ENCODE measurements at regions of chr19 and their contacts with region 1.

Region 1: GRCh38 chr19:44757735-44758505 is 9.4 kb downstream of the BCL3 start:
- DNase-seq: peak in 1 of 2 donors; percentile 83
- H3K4me3 ChIP-seq: peak overlapping the region; percentile 59 to 60
- H3K27ac ChIP-seq: peak overlapping the region; percentile 84 to 91
- H3K4me1 ChIP-seq: peaks cover 16 to 46% of the 10 kb centered on the region in 2 donors
- H3K27me3 ChIP-seq: no peaks in the 10 kb centered on the region
- CTCF ChIP-seq: peak in 2 of 3 experiments; percentile 22 to 55

Region 2: DNA sequence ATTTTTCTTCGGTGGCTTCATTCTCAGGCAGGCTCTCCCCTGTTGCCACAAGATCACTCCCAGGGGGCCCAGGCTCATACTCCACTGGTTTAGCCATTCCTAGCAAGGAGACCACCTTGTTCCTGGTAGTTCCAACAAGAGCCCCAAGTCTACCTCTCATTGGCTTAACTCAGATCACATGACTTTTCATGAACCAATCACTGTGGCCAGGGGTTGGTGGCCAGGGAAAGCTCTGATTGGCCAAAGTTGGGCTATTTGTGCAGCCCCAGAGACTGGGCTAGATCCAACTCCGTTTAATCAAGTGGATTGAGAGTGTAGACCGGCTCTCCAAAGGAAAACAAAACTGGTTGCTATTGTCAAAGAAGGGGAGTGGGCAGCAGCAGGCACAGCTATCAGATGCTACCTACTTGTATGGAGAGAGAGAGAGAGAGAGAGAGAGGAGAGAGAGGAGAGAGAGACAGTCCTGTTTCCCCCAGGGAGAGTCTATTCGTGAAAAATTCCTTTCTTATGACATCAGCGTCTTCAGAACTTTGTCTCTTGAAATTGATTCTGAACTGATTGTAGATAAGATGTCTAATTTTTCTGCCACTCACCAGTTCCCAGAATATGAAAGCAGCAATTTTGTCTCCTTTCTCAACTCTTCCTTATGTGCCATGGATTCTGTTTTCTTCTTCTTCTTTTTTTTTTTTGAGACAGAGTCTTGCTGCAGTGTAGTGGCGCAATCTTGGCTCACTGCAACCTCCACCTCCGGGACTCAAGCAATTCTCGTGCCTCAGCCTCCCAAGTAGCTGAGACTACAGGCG is 80.7 kb before region 1 on chr19:
- intact Hi-C with region 1: no loop called
- DNase-seq: no peak
- H3K4me3 ChIP-seq: no peak overlapping the region
- H3K27ac ChIP-seq: no peak overlapping the region
- H3K4me1 ChIP-seq: no peaks in the 10 kb centered on the region
- H3K27me3 ChIP-seq: no peaks in the 10 kb centered on the region
- CTCF ChIP-seq: no peak

Region 3: DNA sequence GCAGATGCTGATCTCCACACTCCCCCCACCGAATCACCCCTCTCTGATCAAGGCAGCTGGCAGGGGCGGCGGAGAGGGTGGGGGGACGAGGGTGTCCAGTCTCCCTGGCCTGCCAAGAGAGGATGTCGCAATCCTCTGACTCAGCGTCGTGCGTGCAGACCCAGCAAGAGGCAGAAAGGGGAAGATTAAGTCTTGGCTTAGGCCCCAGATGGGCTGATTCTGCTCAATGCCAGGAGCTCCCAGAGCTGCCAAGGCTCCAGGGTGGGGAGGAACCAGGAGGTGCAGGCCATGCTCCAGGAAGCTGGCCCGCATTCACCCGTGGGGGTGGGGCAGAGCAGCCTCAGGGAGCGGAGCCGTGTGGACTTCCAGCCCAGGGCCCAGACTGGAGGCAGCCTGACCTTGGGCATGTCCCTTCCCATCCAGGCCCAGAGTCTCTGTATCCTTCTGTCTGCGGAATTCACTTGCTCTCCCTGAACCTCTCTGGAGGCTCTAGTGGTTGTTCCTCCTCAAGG is 16.0 kb before region 1 on chr19:
- intact Hi-C with region 1: loop called (anchors 1 kb)
- DNase-seq: peak; percentile 97 to 99
- H3K4me3 ChIP-seq: peak overlapping the region in 1 of 2 donors; percentile 17
- H3K27ac ChIP-seq: peak overlapping the region; percentile 82 to 83
- H3K4me1 ChIP-seq: peaks cover 24 to 32% of the 10 kb centered on the region in 2 donors
- H3K27me3 ChIP-seq: no peaks in the 10 kb centered on the region
- CTCF ChIP-seq: no peak

Region 4: DNA sequence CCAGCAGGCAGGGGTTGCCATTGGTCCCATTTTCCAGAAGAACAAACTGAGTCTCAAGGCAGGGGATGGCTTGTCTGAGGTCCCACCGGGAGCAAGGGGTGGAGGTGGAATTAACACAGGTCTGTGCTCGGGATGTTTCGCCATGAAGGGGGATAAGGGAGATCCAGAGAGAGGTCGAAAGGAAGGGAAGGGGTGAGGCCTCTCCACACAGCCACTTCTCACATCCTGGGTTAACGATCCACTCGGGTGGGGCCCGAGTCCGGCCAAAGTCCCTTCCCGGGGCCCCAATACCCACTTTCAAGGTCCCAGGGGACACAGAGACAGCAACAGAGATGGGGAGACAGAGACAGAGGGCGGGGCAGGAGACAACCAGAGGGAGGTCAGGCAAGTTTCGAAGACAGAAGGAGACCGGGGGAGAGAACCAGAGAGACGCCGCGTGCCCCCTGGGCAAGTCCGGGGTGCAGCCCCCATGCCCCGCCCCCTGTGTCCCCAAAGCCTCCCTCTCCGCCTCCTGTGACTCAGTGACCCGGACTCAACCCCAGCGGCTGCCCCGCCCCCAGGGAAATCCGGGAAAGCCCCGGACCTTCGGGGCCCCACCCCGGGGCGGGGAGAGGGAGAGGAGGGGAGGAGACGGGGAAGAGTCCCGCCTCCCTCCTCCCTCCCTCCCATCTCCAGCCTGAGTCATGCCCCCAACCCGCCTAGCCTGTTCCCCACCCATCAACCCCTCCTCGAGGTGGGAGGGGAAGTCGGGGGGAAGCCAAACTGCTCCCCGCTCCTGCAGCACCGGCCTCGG is 10.8 kb before region 1 on chr19:
- intact Hi-C with region 1: loop called (anchors 1 kb)
- DNase-seq: peak; percentile 89 to 98
- H3K4me3 ChIP-seq: peak overlapping the region; percentile 75 to 83
- H3K27ac ChIP-seq: peak overlapping the region; percentile 82 to 85
- H3K4me1 ChIP-seq: peaks cover 22 to 32% of the 10 kb centered on the region in 2 donors
- H3K27me3 ChIP-seq: no peaks in the 10 kb centered on the region
- CTCF ChIP-seq: no peak

Region 5: GRCh38 chr19:44800461-44800860 is 42.5 kb after region 1 on chr19:
- intact Hi-C with region 1: no loop called
- DNase-seq: peak; percentile 41 to 91
- H3K4me3 ChIP-seq: no peak overlapping the region
- H3K27ac ChIP-seq: no peak overlapping the region
- H3K4me1 ChIP-seq: peaks cover 4 to 9% of the 10 kb centered on the region in 2 donors
- H3K27me3 ChIP-seq: no peaks in the 10 kb centered on the region
- CTCF ChIP-seq: peak; percentile 90 to 96 (median 94)

Region 6: GRCh38 chr19:45016388-45017319 is 258.7 kb after region 1 on chr19:
- intact Hi-C with region 1: no loop called
- DNase-seq: peak; percentile 19 to 75
- H3K4me3 ChIP-seq: no peak overlapping the region
- H3K27ac ChIP-seq: peak overlapping the region in 1 of 2 donors; percentile 28
- H3K4me1 ChIP-seq: no peaks in the 10 kb centered on the region
- H3K27me3 ChIP-seq: no peaks in the 10 kb centered on the region
- CTCF ChIP-seq: peak; percentile 40 to 57 (median 45)